CD8-positive, alpha-beta T cell (primary cell): ENCODE measurements at regions of chr22 and their contacts with region 1.

Region 1: DNA sequence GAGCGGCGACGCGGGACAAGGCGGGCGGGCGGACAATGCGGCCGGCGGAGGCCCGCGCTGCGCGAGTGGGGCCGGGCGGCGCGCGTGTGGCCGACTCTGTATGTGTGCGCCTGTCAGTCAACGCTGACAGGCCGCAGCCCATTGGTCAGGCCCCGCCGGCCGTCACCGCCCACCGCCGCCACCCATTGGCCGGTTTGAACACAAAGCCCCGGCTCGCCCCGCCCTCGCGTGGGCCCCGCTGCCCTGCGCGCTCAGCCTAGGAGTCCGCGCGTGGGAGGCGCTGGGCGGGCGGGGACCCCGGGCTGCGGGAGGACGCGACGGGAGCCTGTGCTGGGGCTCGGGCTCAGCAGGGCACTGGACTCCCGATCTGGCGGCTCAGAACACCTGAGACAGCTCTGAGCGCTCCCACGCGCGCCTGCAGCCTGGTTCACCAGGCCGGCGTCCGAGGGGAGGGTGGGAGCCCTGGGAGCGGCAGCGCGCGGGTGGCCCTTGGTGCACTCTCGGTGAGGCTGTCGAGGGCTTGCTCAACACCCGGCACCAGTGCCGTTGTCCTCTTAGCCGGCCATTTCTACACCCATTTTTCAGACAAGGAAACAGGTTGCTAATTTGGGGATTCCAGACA is at the start of gene SUN2:
- DNase-seq: peak; percentile 90 to 97 (median 94)
- ATAC-seq: peak; percentile 66
- H3K4me3 ChIP-seq: peak within 1 kb of the TSS; percentile 91 to 96
- H3K4me3 Mint-ChIP-seq: peak within 1 kb of the TSS; percentile 98
- H3K27ac ChIP-seq: peak within 1 kb of the TSS; percentile 65 to 73
- H3K27ac Mint-ChIP-seq: peak within 1 kb of the TSS; percentile 99
- H3K4me1 ChIP-seq: peaks cover 57% of the 10 kb centered on the region
- H3K4me1 Mint-ChIP-seq: peaks cover 58% of the 10 kb centered on the region
- H3K27me3 ChIP-seq: no peaks in the 10 kb centered on the region
- H3K27me3 Mint-ChIP-seq: no peaks in the 10 kb centered on the region
- CTCF ChIP-seq: no peak
- total RNA-seq, gene SUN2: 431 to 454 TPM

Region 2: GRCh38 chr22:38733329-38733723 is 22.7 kb before region 1 on chr22:
- CTCF ChIA-PET with region 1: interaction called, 125 read pairs
- POLR2A ChIA-PET with region 1: interaction called, 589 read pairs
- intact Hi-C with region 1: loop called in 1 of 2 experiments (anchors 1 kb)
- DNase-seq: peak in 7 of 9 experiments; percentile 56 to 84 (median 67)
- ATAC-seq: peak; percentile 64
- H3K4me3 ChIP-seq: no peak overlapping the region
- H3K4me3 Mint-ChIP-seq: no peak overlapping the region
- H3K27ac ChIP-seq: peak overlapping the region in 1 of 2 experiments; percentile 40
- H3K27ac Mint-ChIP-seq: peak overlapping the region; percentile 75
- H3K4me1 ChIP-seq: peaks cover 49% of the 10 kb centered on the region
- H3K4me1 Mint-ChIP-seq: peaks cover 56% of the 10 kb centered on the region
- H3K27me3 ChIP-seq: no peaks in the 10 kb centered on the region
- H3K27me3 Mint-ChIP-seq: no peaks in the 10 kb centered on the region
- CTCF ChIP-seq: peak; percentile 83

Region 3: DNA sequence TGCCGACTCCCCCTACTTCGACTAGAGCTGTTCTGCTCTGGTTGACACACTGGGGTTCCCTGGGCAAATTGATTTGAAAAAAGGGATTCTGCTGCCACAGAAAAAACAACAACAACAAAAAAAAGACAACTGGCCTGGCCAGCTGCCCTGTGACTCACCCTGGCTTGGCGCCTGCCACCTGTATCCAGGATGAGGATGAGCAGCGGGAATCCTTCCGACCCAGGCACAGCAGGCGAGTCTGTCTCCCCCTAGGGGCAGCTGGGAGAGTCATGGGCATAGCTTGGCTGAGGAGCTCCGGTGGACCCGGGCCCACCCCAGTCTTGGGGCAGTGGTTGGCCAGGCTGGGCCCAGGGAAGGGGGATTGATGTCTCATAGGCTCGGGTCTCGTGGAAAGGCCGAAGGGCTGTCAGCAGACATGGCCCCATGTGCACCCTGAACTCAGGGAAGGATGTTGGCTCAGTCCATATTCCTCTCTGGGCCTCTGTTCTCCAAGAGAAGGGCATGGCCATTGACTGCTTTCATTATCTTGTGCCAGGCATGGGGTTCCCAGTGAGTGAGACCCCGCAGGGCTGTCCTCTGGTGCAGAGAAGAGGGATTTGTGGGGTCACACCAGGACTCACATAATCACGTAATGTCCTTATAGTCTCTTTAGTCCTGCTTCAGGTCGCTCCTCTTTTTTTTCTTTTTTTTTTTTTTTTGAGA is 10.2 kb after region 1 on chr22:
- CTCF ChIA-PET with region 1: interaction called, 15 read pairs
- POLR2A ChIA-PET with region 1: interaction called, 13 read pairs
- intact Hi-C with region 1: loop called in 1 of 2 experiments (anchors 2 kb)
- DNase-seq: peak in 7 of 9 experiments; percentile 34 to 74 (median 55)
- ATAC-seq: peak; percentile 63
- H3K4me3 ChIP-seq: no peak overlapping the region
- H3K4me3 Mint-ChIP-seq: no peak overlapping the region
- H3K27ac ChIP-seq: no peak overlapping the region
- H3K27ac Mint-ChIP-seq: no peak overlapping the region
- H3K4me1 ChIP-seq: peaks cover 6% of the 10 kb centered on the region
- H3K4me1 Mint-ChIP-seq: peaks cover 11% of the 10 kb centered on the region
- H3K27me3 ChIP-seq: no peaks in the 10 kb centered on the region
- H3K27me3 Mint-ChIP-seq: no peaks in the 10 kb centered on the region
- CTCF ChIP-seq: peak; percentile 54

Region 4: DNA sequence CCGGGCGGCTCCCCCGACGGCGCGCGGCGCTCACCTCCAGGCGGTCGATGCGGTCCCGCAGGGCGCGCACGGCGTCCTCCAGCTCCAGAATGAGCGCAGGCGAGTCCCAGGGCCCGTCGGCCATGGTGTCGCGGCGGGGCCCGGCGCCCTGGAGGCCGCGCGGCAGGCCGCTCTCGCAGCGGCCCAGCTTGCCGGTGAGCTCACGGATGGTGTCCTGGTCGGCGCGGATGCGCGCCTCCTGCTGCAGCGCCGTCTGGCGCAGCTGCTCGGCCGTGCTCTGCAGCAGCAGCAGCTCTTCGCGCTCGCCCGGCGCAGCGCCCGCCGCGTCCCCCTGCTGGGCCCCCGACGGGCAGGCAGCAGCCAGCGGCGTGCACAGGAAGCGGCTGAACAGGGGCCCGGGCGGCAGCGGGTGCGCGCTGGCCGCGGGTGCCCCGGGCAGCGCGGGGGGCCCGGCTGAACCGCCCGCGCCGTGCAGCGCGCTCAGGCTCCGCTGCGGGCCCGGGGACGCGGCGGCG is 87.2 kb after region 1 on chr22:
- CTCF ChIA-PET with region 1: interaction called, 10 read pairs
- POLR2A ChIA-PET with region 1: interaction called, 15 read pairs
- intact Hi-C with region 1: loop called (anchors 5 kb)
- DNase-seq: peak; percentile 19 to 85 (median 54)
- ATAC-seq: peak; percentile 85
- H3K4me3 ChIP-seq: peak overlapping the region in 1 of 2 experiments; percentile 50
- H3K4me3 Mint-ChIP-seq: peak overlapping the region; percentile 29
- H3K27ac ChIP-seq: no peak overlapping the region
- H3K27ac Mint-ChIP-seq: no peak overlapping the region
- H3K4me1 ChIP-seq: peaks cover 19% of the 10 kb centered on the region
- H3K4me1 Mint-ChIP-seq: peaks cover 26% of the 10 kb centered on the region
- H3K27me3 ChIP-seq: no peaks in the 10 kb centered on the region
- H3K27me3 Mint-ChIP-seq: peaks cover 14% of the 10 kb centered on the region
- CTCF ChIP-seq: no peak

Region 5: DNA sequence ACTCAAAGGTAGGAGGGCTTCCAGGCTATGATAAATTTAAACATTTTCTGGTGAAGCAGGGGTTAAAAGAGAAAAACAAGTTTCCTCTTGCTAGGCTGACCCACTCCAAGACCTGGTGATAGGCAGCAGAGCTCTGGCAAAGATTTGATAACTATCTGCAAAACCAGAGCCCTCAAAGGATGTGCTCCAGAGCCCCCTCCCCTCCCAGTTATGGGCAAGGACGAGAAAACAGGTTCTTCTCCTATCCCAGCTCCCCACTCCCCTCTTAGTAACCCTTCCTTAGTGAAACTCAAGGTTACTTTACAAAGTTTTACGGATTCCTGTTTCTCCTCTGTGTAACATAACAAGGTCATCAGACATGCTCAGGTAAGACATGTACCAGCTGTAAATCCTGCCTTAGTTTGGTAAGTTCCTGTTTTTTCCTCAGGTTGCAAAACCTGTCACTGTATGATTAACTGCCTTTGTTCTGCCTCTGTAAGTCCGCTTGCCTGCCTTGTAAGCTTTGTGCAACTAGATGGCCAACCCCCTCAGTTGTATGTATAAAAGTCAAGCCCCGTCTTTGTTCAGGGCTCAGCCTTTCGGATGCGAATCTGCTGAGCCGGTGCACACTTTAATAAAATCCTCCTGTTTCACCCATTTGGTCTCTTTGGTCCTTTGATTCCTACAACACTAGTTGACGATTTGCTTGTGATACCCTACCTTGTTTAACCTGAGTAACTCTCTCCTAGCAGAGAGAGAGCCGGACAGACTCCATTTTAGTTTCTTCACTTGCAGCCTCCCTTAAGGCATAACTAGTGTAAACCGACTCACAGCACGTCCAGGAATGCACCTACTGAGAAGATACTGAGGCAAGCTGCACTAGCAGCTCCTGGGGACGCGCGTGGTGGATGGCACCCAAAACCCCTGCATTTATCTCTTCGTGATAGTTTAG is 354.9 kb after region 1 on chr22:
- CTCF ChIA-PET with region 1: no interaction called
- POLR2A ChIA-PET with region 1: no interaction called
- intact Hi-C with region 1: no loop called
- DNase-seq: no peak
- ATAC-seq: no peak
- H3K4me3 ChIP-seq: no peak overlapping the region
- H3K4me3 Mint-ChIP-seq: no peak overlapping the region
- H3K27ac ChIP-seq: no peak overlapping the region
- H3K27ac Mint-ChIP-seq: no peak overlapping the region
- H3K4me1 ChIP-seq: no peaks in the 10 kb centered on the region
- H3K4me1 Mint-ChIP-seq: peaks cover 7% of the 10 kb centered on the region
- H3K27me3 ChIP-seq: no peaks in the 10 kb centered on the region
- H3K27me3 Mint-ChIP-seq: no peaks in the 10 kb centered on the region
- CTCF ChIP-seq: no peak